ENCODE measurements at regions of chr3 and their contacts with region 1.

Region 1: GRCh38 chr3:142270407-142270806 is 45.0 kb upstream of the GK5 start:
- H3K4me3 Mint-ChIP-seq: no peak overlapping the region
- H3K27ac Mint-ChIP-seq: no peak overlapping the region
- H3K4me1 Mint-ChIP-seq: peaks cover 17% of the 10 kb centered on the region
- H3K27me3 Mint-ChIP-seq: no peaks in the 10 kb centered on the region

Region 2: DNA sequence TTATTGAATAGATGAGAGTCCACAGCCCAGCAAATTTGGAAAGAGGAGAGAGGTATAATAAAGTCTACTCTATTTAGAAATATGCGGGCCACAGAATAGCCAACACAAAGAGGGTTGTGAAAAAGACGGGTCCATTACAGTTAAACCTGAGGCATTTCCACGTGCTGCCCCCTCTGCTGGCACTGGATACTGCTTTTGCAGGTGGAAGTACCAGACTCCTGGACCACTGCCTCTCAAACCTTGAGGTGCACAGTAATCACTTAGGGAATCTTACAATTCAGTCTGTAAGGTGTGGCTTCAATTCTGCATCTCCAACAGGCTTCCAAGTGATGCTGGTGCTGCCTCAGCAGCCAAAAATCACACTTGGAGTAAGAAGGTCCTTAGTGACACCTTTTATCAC is 118.0 kb before region 1 on chr3:
- intact Hi-C with region 1: no loop called
- H3K4me3 Mint-ChIP-seq: no peak overlapping the region
- H3K27ac Mint-ChIP-seq: no peak overlapping the region
- H3K4me1 Mint-ChIP-seq: peaks cover 22% of the 10 kb centered on the region
- H3K27me3 Mint-ChIP-seq: peaks cover 4% of the 10 kb centered on the region

Region 3: GRCh38 chr3:142224482-142225072 is 45.8 kb before region 1 on chr3:
- intact Hi-C with region 1: loop called (anchors 5 kb)
- H3K4me3 Mint-ChIP-seq: peak overlapping the region; percentile 86
- H3K27ac Mint-ChIP-seq: peak overlapping the region; percentile 91
- H3K4me1 Mint-ChIP-seq: peaks cover 17% of the 10 kb centered on the region
- H3K27me3 Mint-ChIP-seq: no peaks in the 10 kb centered on the region

Measured in dendritic cell treated with granulocyte-macrophage colony-stimulating factor and Interleukin-4, amounts not matched to agents 40 ng/mL and 50 ng/mL, for 4 days (primary cell).